Posterior vena cava (tissue), 2 donors: ENCODE measurements at regions of chr5 and their contacts with region 1.

Region 1: DNA sequence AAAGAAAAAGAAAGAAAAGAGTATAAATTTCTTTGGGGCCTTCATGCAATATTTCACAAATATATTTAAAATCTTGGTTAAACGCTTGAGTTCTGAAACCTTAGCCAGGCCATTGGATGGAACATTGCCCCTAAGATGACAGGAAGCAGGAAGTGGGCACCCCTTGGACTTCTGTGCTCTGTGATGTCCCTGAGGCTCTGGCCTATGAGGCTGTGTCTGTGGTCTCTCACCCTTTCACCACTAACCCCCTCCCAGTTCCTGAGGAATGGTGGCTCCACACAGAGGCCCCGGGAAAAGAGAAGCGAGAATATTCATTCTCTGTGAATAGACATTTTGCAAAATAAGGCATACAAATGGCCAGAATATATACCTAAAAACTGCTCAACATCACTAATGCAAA is 320.5 kb upstream of the PANK3 start:
- DNase-seq: no peak

Region 2: GRCh38 chr5:167709625-167710024 is 1190.0 kb before region 1 on chr5:
- intact Hi-C with region 1: no loop called
- DNase-seq: no peak

Region 3: GRCh38 chr5:168843277-168844015 is 56.2 kb before region 1 on chr5:
- intact Hi-C with region 1: no loop called
- DNase-seq: no peak

Region 4: GRCh38 chr5:168960497-168960896 is 60.8 kb after region 1 on chr5:
- intact Hi-C with region 1: loop called in 1 of 2 experiments (anchors 2 kb)
- DNase-seq: no peak

Region 5: GRCh38 chr5:169029661-169030274 is 130.1 kb after region 1 on chr5:
- intact Hi-C with region 1: no loop called
- DNase-seq: no peak